ENCODE measurements at regions of chrX and their contacts with region 1.

Region 1: DNA sequence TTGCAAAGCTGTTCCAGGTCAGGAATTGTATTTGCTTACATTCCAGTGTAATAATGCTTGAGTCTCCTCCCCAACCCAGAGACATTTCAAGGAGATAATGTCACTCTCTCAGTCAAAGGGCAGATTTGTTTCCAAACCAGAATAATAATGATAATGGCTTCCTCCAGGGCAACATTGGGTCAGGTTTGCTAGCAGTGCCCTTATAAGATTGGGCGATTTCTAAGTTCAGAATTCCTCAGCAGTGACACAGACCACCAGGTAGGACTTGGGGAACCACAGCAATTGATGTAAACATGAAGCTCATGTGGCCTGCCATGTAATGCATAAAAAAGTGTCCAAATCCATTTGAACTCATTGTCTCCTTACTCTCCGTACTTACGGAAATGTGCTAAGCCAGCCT is 125.2 kb downstream of the BMP15 start:
- DNase-seq: no peak
- H3K4me3 ChIP-seq: no peak overlapping the region
- H3K27ac ChIP-seq: no peak overlapping the region
- H3K4me1 ChIP-seq: no peaks in the 10 kb centered on the region
- H3K27me3 ChIP-seq: no peaks in the 10 kb centered on the region
- CTCF ChIP-seq: no peak

Region 2: DNA sequence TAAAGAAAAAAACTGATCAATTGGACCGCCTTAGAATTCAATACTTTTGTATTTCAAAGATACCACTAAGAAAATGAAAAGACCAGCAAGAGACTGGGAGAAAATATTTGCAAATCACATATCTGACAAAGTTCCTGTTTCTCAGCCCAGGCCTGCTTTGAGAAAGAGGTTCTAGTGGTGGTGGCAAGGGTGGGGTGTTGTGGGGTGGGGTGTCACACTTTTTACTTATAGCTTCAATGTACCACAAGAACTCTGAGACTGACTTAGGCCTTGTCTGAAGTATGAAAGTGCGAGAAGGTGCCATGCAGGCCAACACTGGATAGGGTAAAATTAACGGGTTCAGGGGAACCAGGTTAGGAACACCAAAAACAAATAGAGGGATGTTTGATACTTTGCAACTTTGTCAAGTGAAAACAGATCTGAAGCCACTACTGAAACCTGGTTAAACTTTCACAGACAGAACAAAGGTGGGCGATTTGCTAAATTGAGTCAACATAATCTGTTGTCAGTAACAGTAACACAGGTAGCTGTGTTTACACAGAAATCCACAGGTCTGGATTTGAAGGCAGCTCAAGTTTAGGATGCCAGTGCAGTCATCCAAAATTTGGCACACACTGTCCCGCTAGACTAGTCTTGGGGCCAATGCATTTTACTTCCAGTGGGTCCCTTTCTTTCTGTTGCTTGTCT is 653.9 kb before region 1 on chrX:
- CTCF ChIA-PET with region 1: interaction called, 13 read pairs
- dilution Hi-C with region 1: no loop called
- in situ Hi-C with region 1: no loop called
- intact Hi-C with region 1: no loop called
- DNase-seq: no peak
- H3K4me3 ChIP-seq: no peak overlapping the region
- H3K27ac ChIP-seq: no peak overlapping the region
- H3K4me1 ChIP-seq: no peaks in the 10 kb centered on the region
- H3K27me3 ChIP-seq: no peaks in the 10 kb centered on the region
- CTCF ChIP-seq: no peak

Region 3: GRCh38 chrX:50889582-50889981 is 146.2 kb before region 1 on chrX:
- CTCF ChIA-PET with region 1: no interaction called
- dilution Hi-C with region 1: no loop called
- in situ Hi-C with region 1: no loop called
- intact Hi-C with region 1: no loop called
- DNase-seq: no peak
- H3K4me3 ChIP-seq: no peak overlapping the region
- H3K27ac ChIP-seq: no peak overlapping the region
- H3K4me1 ChIP-seq: no peaks in the 10 kb centered on the region
- H3K27me3 ChIP-seq: no peaks in the 10 kb centered on the region
- CTCF ChIP-seq: no peak

Measured in mammary epithelial cell (primary cell).